Ascending aorta (tissue), 2 donors: ENCODE measurements at regions of chr5 and their contacts with region 1.

Region 1: DNA sequence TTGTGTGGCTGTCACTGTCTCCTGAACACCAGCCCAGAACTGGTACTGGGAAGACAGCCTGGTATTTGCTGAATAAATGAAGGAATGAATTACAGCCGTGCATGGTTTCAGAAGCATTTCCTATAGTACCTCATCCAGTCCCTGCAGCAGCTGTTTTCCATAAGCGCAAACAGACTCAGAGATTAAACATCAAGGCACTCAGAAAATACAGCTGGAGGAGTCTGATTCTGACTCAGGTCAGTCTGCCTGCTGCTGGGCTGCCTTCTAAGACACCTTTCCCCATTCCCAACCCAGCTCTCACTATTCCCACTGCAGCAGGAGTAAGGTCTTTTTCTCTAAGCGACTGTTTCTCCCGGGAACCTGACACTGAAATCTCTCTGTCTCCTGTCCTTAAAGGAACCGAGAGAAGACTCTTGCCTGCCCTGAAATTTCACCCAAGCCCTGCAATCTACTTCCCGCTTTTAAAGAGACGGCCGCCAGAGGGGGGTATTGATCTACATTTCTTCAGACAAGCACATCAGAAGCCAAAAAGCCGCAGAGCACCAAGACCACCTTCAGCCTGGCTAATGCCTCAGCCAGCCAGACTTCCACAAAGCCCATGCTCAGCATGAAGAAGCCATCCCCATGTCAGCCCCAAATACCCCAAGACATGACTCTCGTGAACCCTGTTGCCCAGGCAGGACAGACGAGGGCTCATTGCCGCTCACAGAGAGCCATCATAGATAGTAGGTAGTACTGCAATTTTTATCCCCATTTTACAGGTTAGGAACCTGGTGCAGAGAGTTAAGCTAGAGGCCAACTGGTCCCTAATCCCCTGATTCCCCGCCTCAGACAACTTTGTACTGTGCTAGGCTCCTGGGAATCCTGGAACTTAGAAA is 5.4 kb upstream of the FOXI1 start:
- DNase-seq: peak in 1 of 2 donors; percentile 86
- H3K4me3 ChIP-seq: no peak overlapping the region
- H3K27ac ChIP-seq: no peak overlapping the region
- H3K4me1 ChIP-seq: no peaks in the 10 kb centered on the region
- H3K27me3 ChIP-seq: no peaks in the 10 kb centered on the region
- CTCF ChIP-seq: peak; percentile 43 to 68 (median 53)

Region 2: GRCh38 chr5:168353216-168353957 is 1746.9 kb before region 1 on chr5:
- intact Hi-C with region 1: no loop called
- DNase-seq: no peak
- H3K4me3 ChIP-seq: no peak overlapping the region
- H3K27ac ChIP-seq: no peak overlapping the region
- H3K4me1 ChIP-seq: no peaks in the 10 kb centered on the region
- H3K27me3 ChIP-seq: no peaks in the 10 kb centered on the region
- CTCF ChIP-seq: no peak

Region 3: GRCh38 chr5:170169996-170170395 is 69.7 kb after region 1 on chr5:
- intact Hi-C with region 1: no loop called
- DNase-seq: no peak
- H3K4me3 ChIP-seq: no peak overlapping the region
- H3K27ac ChIP-seq: no peak overlapping the region
- H3K4me1 ChIP-seq: no peaks in the 10 kb centered on the region
- H3K27me3 ChIP-seq: no peaks in the 10 kb centered on the region
- CTCF ChIP-seq: no peak

Region 4: DNA sequence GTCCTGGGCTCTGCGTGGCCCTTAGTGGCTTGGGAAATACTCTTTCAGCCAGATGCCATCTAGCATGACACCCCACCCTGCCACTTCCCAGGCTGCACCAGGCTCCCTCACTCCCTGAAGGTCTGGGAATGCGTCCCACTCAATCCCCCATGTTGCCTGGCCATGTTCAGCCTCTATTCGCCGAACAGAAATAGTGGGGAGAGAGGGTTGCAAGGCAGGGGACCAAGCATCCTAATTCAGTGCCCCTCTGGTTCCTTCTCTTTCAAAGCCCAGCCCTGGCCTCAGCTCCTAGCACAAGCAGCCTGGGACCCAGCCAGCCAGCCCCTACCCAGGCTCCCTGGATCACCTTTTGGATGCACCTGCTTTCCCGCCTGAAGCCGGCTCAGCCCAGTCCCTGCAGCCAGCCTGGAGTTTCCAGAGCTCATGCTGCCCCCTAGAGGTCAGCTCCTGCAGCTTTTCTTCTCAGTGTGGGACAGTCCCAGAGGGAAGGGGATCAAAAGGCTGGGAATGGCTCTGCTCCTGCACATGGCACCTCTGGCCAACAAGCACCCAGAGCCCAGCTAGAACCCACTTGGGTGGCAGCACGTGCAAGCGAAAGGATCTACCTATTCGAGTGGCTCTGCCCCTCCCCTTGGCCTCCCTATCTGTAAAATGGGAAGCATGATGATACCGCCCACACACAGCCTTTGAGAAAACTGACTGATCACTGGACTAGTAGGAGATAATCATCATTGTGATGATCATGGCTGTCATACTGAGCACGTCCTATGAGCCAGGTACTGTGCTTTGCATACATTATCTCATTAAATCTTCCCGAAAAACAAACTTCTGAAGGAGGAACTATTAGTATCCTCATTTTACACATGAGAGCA is 83.7 kb after region 1 on chr5:
- intact Hi-C with region 1: loop called (anchors 1 kb)
- DNase-seq: peak in 1 of 2 donors; percentile 68
- H3K4me3 ChIP-seq: no peak overlapping the region
- H3K27ac ChIP-seq: no peak overlapping the region
- H3K4me1 ChIP-seq: no peaks in the 10 kb centered on the region
- H3K27me3 ChIP-seq: no peaks in the 10 kb centered on the region
- CTCF ChIP-seq: peak; percentile 37 to 76 (median 59)

Region 5: DNA sequence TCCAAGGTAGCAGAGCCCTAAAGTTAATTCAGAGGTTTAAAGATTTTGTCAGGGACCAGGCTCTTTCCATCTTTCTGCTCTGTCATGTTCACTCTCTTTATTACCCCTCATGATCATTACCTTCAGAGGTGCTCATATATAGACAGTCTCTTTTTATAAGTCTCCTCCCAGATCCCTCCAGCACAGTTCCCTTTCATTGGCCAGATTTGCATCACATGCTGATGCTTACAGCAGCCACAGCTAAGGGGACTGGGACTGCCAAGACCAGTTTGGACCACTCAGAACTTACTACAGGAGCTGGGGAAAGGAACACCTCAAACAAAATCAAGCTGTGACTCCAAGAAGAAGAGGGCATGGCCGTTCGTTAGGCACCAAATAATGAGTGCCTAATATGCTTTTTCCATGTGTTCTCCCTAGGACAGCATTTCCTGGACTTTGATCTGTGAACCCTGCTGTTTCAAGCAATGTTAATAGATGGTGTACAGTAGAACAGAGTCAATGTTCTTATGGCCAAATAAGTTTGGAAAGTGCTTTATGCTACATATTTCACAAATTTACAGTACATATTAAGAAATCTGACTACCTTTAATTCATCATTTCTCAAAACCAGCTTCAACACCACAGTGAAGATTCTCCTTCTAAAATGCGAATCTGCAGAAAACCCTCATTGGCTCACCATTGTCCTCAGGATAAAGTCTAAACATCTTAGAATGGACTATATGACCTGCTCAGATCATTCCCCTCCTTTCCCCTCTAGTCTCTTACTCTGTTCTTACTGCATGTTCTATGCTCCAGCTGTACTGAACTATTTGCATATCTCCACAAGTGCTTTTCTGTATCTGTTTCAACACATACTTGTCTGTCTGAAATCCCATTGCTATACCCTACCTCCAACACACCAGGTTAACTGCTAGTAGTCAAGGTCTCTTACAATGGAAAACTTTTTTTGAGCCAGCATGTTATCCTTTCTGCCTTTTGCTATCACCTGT is 135.9 kb after region 1 on chr5:
- intact Hi-C with region 1: no loop called
- DNase-seq: no peak
- H3K4me3 ChIP-seq: no peak overlapping the region
- H3K27ac ChIP-seq: no peak overlapping the region
- H3K4me1 ChIP-seq: no peaks in the 10 kb centered on the region
- H3K27me3 ChIP-seq: no peaks in the 10 kb centered on the region
- CTCF ChIP-seq: no peak

Region 6: GRCh38 chr5:170420780-170421412 is 320.6 kb after region 1 on chr5:
- intact Hi-C with region 1: loop called (anchors 5 kb)
- DNase-seq: peak in 1 of 2 donors; percentile 82
- H3K4me3 ChIP-seq: no peak overlapping the region
- H3K27ac ChIP-seq: no peak overlapping the region
- H3K4me1 ChIP-seq: no peaks in the 10 kb centered on the region
- H3K27me3 ChIP-seq: no peaks in the 10 kb centered on the region
- CTCF ChIP-seq: peak; percentile 54 to 84 (median 76)